ENCODE measurements at regions of chrX and their contacts with region 1.

Region 1: DNA sequence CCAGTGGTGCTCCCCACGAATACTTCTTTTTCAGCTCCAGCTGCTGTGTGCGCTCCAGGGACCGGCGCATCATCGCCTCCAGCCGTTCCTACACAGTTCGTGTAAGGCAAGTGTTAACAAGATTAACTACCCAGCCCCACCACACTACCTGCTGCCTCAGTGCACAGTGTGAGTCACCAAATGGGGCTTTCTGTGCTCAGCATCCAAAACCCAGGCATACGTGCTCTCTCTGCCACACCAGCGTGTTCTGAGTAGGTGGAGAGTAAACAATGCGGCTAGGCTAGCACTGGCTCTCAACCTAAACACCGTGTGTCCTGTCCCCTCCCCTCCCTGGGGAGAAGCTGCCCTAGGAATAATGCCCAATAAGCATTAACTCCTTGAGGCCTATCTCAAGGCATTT is 60.0 kb downstream of the MAP7D2 start:
- DNase-seq: no peak
- ATAC-seq: no peak

Region 2: GRCh38 chrX:20007962-20008622 is 48.6 kb before region 1 on chrX:
- intact Hi-C with region 1: loop called (anchors 2 kb)
- DNase-seq: no peak
- ATAC-seq: no peak